Panc1 (cell line): ENCODE measurements at regions of chr15 and their contacts with region 1.

Region 1: GRCh38 chr15:44296625-44297524 is 8.4 kb downstream of the GOLM2 start:
- DNase-seq: no peak
- ATAC-seq: peak; percentile 63; the same call in 1 of the 2 replicates
- H3K4me3 ChIP-seq: no peak overlapping the region
- H3K27ac ChIP-seq: no peak overlapping the region
- H3K4me1 ChIP-seq: peaks cover 7% of the 10 kb centered on the region; the same call in 1 of the 2 replicates
- H3K27me3 ChIP-seq: no peaks in the 10 kb centered on the region
- CTCF ChIP-seq: no peak

Region 2: GRCh38 chr15:44308415-44308814 is 11.5 kb after region 1 on chr15:
- CTCF ChIA-PET with region 1: no interaction called
- POLR2A ChIA-PET with region 1: interaction called, 16 read pairs
- in situ Hi-C with region 1: no loop called
- intact Hi-C with region 1: no loop called
- DNase-seq: no peak
- ATAC-seq: no peak
- H3K4me3 ChIP-seq: no peak overlapping the region
- H3K27ac ChIP-seq: no peak overlapping the region
- H3K4me1 ChIP-seq: no peaks in the 10 kb centered on the region
- H3K27me3 ChIP-seq: no peaks in the 10 kb centered on the region
- CTCF ChIP-seq: no peak

Region 3: GRCh38 chr15:44340410-44340809 is 43.5 kb after region 1 on chr15:
- CTCF ChIA-PET with region 1: no interaction called
- POLR2A ChIA-PET with region 1: interaction called, 12 read pairs
- in situ Hi-C with region 1: no loop called
- intact Hi-C with region 1: no loop called
- DNase-seq: no peak
- ATAC-seq: no peak
- H3K4me3 ChIP-seq: no peak overlapping the region
- H3K27ac ChIP-seq: no peak overlapping the region
- H3K4me1 ChIP-seq: no peaks in the 10 kb centered on the region
- H3K27me3 ChIP-seq: no peaks in the 10 kb centered on the region
- CTCF ChIP-seq: no peak

Region 4: GRCh38 chr15:44370830-44371229 is 74.0 kb after region 1 on chr15:
- CTCF ChIA-PET with region 1: no interaction called
- POLR2A ChIA-PET with region 1: no interaction called
- in situ Hi-C with region 1: no loop called
- intact Hi-C with region 1: no loop called
- DNase-seq: no peak
- ATAC-seq: no peak
- H3K4me3 ChIP-seq: no peak overlapping the region
- H3K27ac ChIP-seq: no peak overlapping the region
- H3K4me1 ChIP-seq: no peaks in the 10 kb centered on the region
- H3K27me3 ChIP-seq: no peaks in the 10 kb centered on the region
- CTCF ChIP-seq: no peak